ENCODE measurements at regions of chr17 and their contacts with region 1.

Region 1: DNA sequence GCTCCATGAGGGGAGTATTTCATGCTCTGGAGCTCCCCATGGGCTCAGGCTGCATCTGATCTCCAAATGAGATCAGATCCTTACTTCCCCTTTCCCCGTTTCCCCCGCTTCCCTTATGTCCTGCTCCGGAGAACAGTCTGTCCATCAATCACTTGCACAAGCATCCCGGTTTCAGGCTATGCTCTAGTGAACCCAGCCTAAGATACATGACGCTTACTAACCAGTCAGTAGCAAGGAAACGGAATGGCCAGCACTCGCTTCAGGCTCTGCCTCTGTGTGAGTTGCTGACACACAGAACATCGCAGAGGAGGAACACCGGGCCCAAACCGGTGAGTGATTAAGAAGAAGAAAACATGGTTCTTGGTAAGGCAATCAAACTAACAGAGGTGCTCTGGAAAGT is 9.4 kb upstream of the ATP5MC1 start:
- DNase-seq: no peak
- H3K4me3 ChIP-seq: no peak overlapping the region
- H3K27ac ChIP-seq: no peak overlapping the region
- H3K4me1 ChIP-seq: no peaks in the 10 kb centered on the region
- H3K27me3 ChIP-seq: no peaks in the 10 kb centered on the region
- CTCF ChIP-seq: no peak

Region 2: DNA sequence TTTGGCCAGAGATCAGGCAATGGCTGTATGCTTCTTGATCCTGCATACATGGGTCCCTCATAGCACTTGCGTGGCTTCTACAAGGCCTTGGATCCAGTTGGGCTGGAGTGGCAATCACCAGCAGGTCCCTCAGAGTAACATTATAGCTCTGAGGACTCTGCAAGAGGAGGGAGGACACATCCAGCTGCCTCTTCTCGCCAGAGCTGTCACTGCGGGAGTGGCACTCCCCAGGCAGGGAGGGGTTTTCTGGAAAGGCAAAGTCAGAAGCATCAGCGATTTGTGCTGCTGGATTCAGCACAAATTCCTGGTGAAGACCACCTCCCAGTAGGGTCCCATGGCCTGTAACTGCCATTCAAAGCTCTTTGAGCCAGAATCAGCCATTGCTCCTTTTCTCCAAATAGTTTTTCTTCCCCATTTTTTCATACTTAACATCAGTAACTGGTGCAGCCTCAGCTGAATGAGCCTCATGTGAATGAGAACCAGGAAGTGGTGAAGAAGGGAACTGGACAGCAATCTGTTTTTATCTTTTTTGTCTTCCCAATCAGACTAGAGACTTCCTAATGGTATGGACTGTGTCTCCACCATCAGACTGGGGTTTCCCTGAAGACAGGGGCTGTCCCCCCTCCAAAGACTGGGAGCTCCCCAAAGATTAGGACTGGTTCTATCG is 114.0 kb before region 1 on chr17:
- dilution Hi-C with region 1: no loop called
- DNase-seq: no peak
- H3K4me3 ChIP-seq: no peak overlapping the region
- H3K27ac ChIP-seq: no peak overlapping the region
- H3K4me1 ChIP-seq: no peaks in the 10 kb centered on the region
- H3K27me3 ChIP-seq: no peaks in the 10 kb centered on the region
- CTCF ChIP-seq: no peak

Region 3: DNA sequence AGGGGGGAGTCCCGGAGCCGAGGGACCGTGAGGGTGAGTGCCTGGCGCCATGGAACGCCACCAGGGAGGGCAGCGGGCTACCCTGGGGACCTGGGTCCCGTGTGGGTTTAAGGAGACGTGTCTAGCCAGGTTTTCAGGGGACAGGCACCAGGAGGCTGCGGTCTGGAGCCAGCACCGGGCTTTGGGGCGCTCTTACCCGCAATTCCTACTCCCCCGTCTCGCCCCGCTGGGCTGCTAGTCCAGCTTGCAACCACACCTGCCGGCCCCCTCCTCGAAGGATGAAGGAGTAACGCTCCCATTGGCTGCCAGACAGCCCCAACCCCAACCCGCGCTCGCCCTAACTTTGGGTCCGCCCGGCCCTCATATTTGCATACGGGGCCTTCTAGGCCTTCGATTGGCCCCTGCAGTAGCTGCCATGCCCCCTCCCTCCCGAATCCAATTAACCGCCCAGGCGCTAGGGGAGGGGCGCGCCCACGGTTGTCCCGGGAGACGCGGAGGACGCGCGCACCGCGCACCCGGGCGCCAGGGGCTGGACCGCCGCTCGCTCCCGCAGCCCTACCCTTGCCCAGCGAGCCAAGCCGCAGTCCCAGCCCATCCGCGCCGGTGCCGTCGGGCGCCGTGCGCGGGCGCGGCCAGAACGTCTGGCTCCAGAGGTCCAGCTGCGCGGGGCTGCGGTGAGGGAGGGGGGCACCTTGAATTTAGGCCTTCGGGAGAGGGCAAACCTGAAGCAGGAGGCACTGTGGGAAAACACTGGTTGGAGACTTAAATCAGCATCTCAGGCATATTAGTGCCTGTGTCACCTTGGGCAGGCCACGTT is 66.2 kb before region 1 on chr17 and contains the start of gene TTLL6:
- dilution Hi-C with region 1: loop called (anchors 10 kb)
- DNase-seq: no peak
- H3K4me3 ChIP-seq: peak within 1 kb of the TSS; percentile 8 to 42 (median 29)
- H3K27ac ChIP-seq: no peak within 1 kb of the TSS
- H3K4me1 ChIP-seq: peaks cover 9% of the 10 kb centered on the region
- H3K27me3 ChIP-seq: peaks cover 41% of the 10 kb centered on the region
- CTCF ChIP-seq: no peak
- polyA plus RNA-seq, gene TTLL6: not detected in 3 replicates

Measured in keratinocyte (primary cell).